K562 (cell line): ENCODE measurements at regions of chr3 and their contacts with region 1.

Region 1: GRCh38 chr3:9352917-9353752 is 9.7 kb upstream of the THUMPD3 start:
- DNase-seq: peak; percentile 70 to 75 (median 74)
- ATAC-seq: peak; percentile 93
- H3K4me3 ChIP-seq: no peak overlapping the region
- H3K27ac ChIP-seq: no peak overlapping the region
- H3K4me1 ChIP-seq: no peaks in the 10 kb centered on the region; a peak in 2 of 5 replicates
- H3K27me3 ChIP-seq: peaks cover 0 to 8% of the 10 kb centered on the region in 2 experiments; a peak in 1 of 5 replicates
- CTCF ChIP-seq: peak; percentile 82 to 98 (median 95)
- EP300 ChIP-seq: peak; percentile 10; the same call in 1 of the 2 replicates
- POLR2A ChIP-seq: no peak
- RAD21 ChIP-seq: peak; percentile 88 to 97

Region 2: GRCh38 chr3:9369508-9369907 is 16.4 kb after region 1 on chr3:
- CTCF ChIA-PET with region 1: no interaction called
- POLR2A ChIA-PET with region 1: no interaction called
- in situ Hi-C with region 1: no loop called
- intact Hi-C with region 1: no loop called
- DNase-seq: no peak
- ATAC-seq: no peak
- H3K4me3 ChIP-seq: no peak overlapping the region
- H3K27ac ChIP-seq: no peak overlapping the region
- H3K4me1 ChIP-seq: peaks cover 0 to 4% of the 10 kb centered on the region in 2 experiments; a peak in 2 of 5 replicates
- H3K27me3 ChIP-seq: no peaks in the 10 kb centered on the region
- CTCF ChIP-seq: no peak
- EP300 ChIP-seq: no peak
- POLR2A ChIP-seq: no peak
- RAD21 ChIP-seq: no peak

Region 3: GRCh38 chr3:9422712-9423424 is 69.7 kb after region 1 on chr3:
- CTCF ChIA-PET with region 1: interaction called, 34 read pairs
- POLR2A ChIA-PET with region 1: interaction called, 7 read pairs
- in situ Hi-C with region 1: no loop called
- intact Hi-C with region 1: loop called (anchors 1 kb)
- DNase-seq: peak; percentile 53 to 91 (median 66)
- ATAC-seq: peak; percentile 92
- H3K4me3 ChIP-seq: no peak overlapping the region
- H3K27ac ChIP-seq: peak overlapping the region; percentile 77
- H3K4me1 ChIP-seq: peaks cover 0 to 21% of the 10 kb centered on the region in 2 experiments; a peak in 3 of 5 replicates
- H3K27me3 ChIP-seq: no peaks in the 10 kb centered on the region
- CTCF ChIP-seq: peak; percentile 48 to 78 (median 66); a peak in 5 of 6 replicates
- EP300 ChIP-seq: peak; percentile 87
- POLR2A ChIP-seq: no peak
- RAD21 ChIP-seq: peak; percentile 75 to 94

Region 4: DNA sequence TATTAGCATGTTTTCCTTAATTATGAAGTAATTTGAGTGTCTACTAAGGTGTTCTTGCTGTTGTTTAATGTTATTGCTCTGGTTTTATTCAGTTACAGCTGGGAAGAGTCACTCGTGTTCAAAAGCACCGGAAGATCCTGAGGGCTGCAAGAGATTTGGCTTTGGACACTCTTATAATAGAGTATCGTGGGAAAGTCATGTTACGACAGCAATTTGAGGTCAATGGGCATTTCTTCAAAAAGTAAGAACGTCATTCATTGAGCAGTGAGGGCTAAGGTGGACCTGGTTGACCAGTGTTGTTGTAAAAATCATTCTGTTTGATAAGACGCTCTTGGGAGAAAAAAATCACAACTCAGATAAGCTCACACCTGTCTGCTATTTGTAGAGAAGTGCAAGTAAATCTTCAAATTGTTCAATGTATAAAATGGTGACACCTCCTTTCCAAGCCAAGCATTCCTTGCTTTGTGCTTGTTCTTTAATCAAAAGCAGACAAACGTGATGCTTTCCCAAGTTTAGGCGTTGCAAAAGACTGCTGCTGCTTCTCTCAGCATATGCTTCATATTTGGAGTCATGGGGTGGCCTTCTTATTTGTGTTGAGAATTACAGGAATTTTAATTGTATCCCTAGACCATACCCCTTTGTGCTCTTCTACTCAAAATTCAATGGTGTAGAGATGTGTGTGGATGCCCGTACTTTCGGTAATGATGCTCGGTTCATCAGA is 88.5 kb after region 1 on chr3:
- CTCF ChIA-PET with region 1: no interaction called
- POLR2A ChIA-PET with region 1: no interaction called
- in situ Hi-C with region 1: no loop called
- intact Hi-C with region 1: loop called (anchors 5 kb)
- DNase-seq: no peak
- ATAC-seq: no peak
- H3K4me3 ChIP-seq: no peak overlapping the region
- H3K27ac ChIP-seq: no peak overlapping the region
- H3K4me1 ChIP-seq: no peaks in the 10 kb centered on the region
- H3K27me3 ChIP-seq: no peaks in the 10 kb centered on the region
- CTCF ChIP-seq: no peak
- EP300 ChIP-seq: no peak
- POLR2A ChIP-seq: no peak
- RAD21 ChIP-seq: no peak

Region 5: DNA sequence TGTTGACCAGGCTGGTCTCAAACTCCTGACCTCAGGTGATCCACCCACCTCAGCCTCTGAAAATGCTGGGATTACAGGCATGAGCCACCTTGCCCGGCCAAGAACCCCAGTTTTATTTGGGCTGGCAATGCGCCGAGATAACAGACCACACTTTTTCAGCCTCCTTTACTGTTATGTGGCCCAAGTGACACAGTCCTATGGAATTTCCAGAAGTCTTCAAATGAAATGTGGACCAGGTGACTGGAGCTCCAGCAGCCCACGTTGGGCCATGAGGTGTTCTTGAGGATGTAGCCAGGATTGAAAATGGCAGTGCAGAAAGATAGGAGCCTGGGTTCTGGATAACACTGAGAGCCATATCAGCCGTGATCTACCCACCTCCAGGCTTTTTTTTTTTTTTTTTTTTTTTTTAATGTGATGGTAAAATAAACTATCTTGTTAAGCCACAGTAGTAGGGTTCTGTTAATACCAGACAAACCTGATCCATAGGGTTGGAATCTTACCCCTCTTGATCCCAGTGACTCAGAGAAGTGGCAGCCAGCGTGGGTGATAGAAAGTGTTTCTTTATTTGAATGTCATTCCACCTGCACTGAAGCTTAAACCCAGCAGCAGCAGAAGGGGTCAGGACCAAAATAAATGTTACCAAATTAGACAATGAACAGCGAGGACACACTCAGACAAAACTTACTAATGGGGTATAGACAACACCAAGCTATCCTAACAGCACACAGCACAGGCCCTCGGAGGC is 144.9 kb after region 1 on chr3:
- CTCF ChIA-PET with region 1: interaction called, 3 read pairs
- POLR2A ChIA-PET with region 1: no interaction called
- in situ Hi-C with region 1: no loop called
- intact Hi-C with region 1: loop called (anchors 2 kb)
- DNase-seq: no peak
- ATAC-seq: no peak
- H3K4me3 ChIP-seq: no peak overlapping the region
- H3K27ac ChIP-seq: no peak overlapping the region
- H3K4me1 ChIP-seq: peaks cover 6 to 8% of the 10 kb centered on the region in 2 experiments; a peak in 3 of 5 replicates
- H3K27me3 ChIP-seq: peaks cover 4 to 27% of the 10 kb centered on the region in 2 experiments; a peak in 4 of 5 replicates
- CTCF ChIP-seq: no peak
- EP300 ChIP-seq: no peak
- POLR2A ChIP-seq: no peak
- RAD21 ChIP-seq: no peak

Region 6: GRCh38 chr3:9503283-9503682 is 150.1 kb after region 1 on chr3:
- CTCF ChIA-PET with region 1: interaction called, 3 read pairs
- POLR2A ChIA-PET with region 1: no interaction called
- in situ Hi-C with region 1: no loop called
- intact Hi-C with region 1: loop called (anchors 2 kb)
- DNase-seq: peak; percentile 82 to 90 (median 84)
- ATAC-seq: peak; percentile 77
- H3K4me3 ChIP-seq: no peak overlapping the region
- H3K27ac ChIP-seq: no peak overlapping the region
- H3K4me1 ChIP-seq: peaks cover 0 to 8% of the 10 kb centered on the region in 2 experiments; a peak in 3 of 5 replicates
- H3K27me3 ChIP-seq: peaks cover 20 to 47% of the 10 kb centered on the region in 2 experiments; a peak in 4 of 5 replicates
- CTCF ChIP-seq: peak; percentile 88 to 98 (median 97)
- EP300 ChIP-seq: no peak
- POLR2A ChIP-seq: no peak
- RAD21 ChIP-seq: peak; percentile 92 to 96

Region 7: DNA sequence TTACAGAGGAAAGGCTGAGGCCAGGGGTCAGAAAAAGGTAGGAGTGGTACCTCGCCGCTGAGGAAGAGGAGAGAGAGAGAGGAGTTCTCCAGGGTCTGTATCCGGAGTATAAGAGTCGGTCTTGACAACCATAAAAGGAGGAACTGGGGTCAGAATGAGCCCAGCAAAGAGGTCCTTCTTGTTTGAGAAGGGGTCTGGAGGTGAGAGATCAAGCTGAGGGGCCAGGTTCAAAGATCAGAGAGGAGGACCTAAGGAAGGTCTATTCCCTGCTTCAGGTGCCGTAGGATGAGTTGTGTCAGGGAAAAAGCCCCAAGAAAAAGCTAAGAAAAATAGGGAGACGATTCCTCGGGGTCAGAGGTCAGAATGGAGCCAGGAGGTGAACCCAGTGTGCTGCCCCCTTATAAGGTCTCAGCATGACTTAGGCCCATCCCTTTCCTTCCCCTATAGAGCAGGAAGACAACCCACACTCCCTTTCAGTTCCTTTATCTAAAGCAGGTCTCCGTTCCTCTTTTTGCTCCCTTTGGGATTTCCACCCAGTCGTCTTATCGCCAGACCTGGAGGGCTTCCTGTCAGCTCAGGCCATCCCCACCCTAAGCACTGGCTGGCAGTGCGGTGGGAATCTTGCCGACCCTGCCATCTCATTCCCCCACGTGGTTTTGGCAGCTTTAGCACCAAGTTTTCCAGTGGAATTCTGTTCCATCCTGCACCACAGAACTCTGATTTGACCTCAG is 296.8 kb after region 1 on chr3:
- CTCF ChIA-PET with region 1: no interaction called
- POLR2A ChIA-PET with region 1: no interaction called
- in situ Hi-C with region 1: no loop called
- intact Hi-C with region 1: loop called (anchors 5 kb)
- DNase-seq: peak; percentile 34 to 49 (median 38)
- ATAC-seq: no peak
- H3K4me3 ChIP-seq: peak overlapping the region; percentile 95
- H3K27ac ChIP-seq: peak overlapping the region; percentile 72
- H3K4me1 ChIP-seq: peaks cover 13 to 23% of the 10 kb centered on the region in 2 experiments; a peak in 4 of 5 replicates
- H3K27me3 ChIP-seq: no peaks in the 10 kb centered on the region
- CTCF ChIP-seq: no peak
- EP300 ChIP-seq: no peak
- POLR2A ChIP-seq: no peak
- RAD21 ChIP-seq: no peak

Region 8: GRCh38 chr3:9715764-9716437 is 362.8 kb after region 1 on chr3:
- CTCF ChIA-PET with region 1: no interaction called
- POLR2A ChIA-PET with region 1: no interaction called
- in situ Hi-C with region 1: no loop called
- intact Hi-C with region 1: loop called (anchors 10 kb)
- DNase-seq: peak; percentile 82 to 94 (median 87)
- ATAC-seq: peak; percentile 99
- H3K4me3 ChIP-seq: no peak overlapping the region
- H3K27ac ChIP-seq: peak overlapping the region; percentile 62; the same call in 2 of the 3 replicates
- H3K4me1 ChIP-seq: peaks cover 5 to 10% of the 10 kb centered on the region in 2 experiments; a peak in 4 of 5 replicates
- H3K27me3 ChIP-seq: peaks cover 33 to 38% of the 10 kb centered on the region in 2 experiments
- CTCF ChIP-seq: peak; percentile 93 to 99 (median 99)
- EP300 ChIP-seq: peak; percentile 79
- POLR2A ChIP-seq: no peak
- RAD21 ChIP-seq: peak; percentile 99